Activated naive CD4-positive, alpha-beta T cell treated with anti-CD3 and anti-CD28 coated beads, Interleukin-2, amount 10 ng/mL, durations not matched to agents 7 days and 5 days (primary cell): ENCODE measurements at regions of chr3 and their contacts with region 1.

Region 1: GRCh38 chr3:132029182-132029902 is 5.5 kb downstream of the CPNE4 start:
- DNase-seq: peak; percentile 78
- H3K4me3 Mint-ChIP-seq: no peak overlapping the region
- H3K27ac Mint-ChIP-seq: no peak overlapping the region
- H3K4me1 Mint-ChIP-seq: peaks cover 2% of the 10 kb centered on the region
- H3K27me3 Mint-ChIP-seq: peaks cover 25% of the 10 kb centered on the region

Region 2: DNA sequence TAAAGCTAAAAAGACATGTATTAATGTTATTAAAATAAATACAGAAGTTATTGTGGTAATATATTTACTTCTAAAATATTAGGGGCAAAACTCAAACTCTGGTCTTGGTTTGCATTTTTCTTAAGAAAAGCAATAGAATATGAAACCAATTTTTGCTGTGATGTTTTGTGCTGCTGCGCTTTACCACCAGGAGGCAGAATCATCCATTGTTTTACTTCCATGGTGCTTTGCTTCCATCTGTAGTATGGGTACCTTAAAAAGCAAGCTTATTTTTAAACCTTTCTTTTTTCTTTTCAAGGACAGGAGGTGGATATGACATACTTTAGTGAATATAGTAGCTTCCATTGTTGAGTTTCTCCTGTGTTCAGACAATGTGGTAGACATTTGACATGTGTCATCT is 480.0 kb before region 1 on chr3:
- CTCF ChIA-PET with region 1: interaction called, 20 read pairs
- DNase-seq: peak; percentile 25
- H3K4me3 Mint-ChIP-seq: no peak overlapping the region
- H3K27ac Mint-ChIP-seq: no peak overlapping the region
- H3K4me1 Mint-ChIP-seq: peaks cover 19% of the 10 kb centered on the region
- H3K27me3 Mint-ChIP-seq: peaks cover 6% of the 10 kb centered on the region

Region 3: DNA sequence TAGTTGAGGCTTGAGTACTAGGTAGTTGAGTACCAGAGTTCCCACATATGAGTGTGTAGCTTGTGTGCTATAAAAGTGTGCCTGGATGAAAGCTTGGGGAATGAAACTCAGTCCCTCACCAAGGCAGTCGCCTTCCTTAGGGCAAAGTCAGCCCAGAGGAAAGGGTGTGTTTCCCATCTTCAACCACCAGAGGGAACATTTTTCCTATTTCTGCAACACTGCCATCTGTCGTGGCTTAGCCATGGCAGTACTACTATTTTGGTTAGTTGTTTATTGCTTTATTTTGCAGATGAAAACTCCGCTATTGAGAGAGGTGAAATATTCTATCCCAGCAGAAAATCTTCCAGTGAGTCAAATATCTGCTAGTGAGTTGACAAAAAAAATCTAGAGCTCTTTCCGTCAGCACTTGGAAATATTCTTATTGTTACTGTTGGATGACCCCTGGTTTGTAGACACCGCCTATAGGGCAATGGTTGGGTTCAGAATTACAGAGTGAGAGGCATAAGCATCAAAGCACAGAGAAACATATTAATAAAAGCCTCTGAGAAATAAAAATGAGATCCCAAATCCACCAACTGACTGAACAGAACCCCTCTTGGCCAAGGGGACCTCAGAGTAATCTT is 234.5 kb before region 1 on chr3:
- CTCF ChIA-PET with region 1: interaction called, 27 read pairs
- DNase-seq: peak; percentile 29
- H3K4me3 Mint-ChIP-seq: no peak overlapping the region
- H3K27ac Mint-ChIP-seq: no peak overlapping the region
- H3K4me1 Mint-ChIP-seq: no peaks in the 10 kb centered on the region
- H3K27me3 Mint-ChIP-seq: no peaks in the 10 kb centered on the region